Posterior cingulate gyrus (tissue), 11 donors: ENCODE measurements at regions of chr14 and their contacts with region 1.

Region 1: GRCh38 chr14:73713803-73714655 is at the start of gene PNMA1:
- DNase-seq: peak; percentile 84 to 99 (median 92)

Region 2: GRCh38 chr14:73633116-73634010 is 80.7 kb before region 1 on chr14:
- intact Hi-C with region 1: loop called (anchors 5 kb)
- DNase-seq: peak; percentile 34 to 93 (median 64)

Region 3: GRCh38 chr14:73759714-73760597 is 45.9 kb after region 1 on chr14:
- intact Hi-C with region 1: loop called (anchors 2 kb)
- DNase-seq: peak; percentile 81 to 99 (median 90)

Region 4: GRCh38 chr14:73949744-73950734 is 236.0 kb after region 1 on chr14 and contains the starts of genes COQ6 and FAM161B:
- intact Hi-C with region 1: loop called (anchors 10 kb)
- DNase-seq: peak; percentile 89 to 99 (median 94)